Naive thymus-derived CD4-positive, alpha-beta T cell (primary cell): ENCODE measurements at regions of chr2 and their contacts with region 1.

Region 1: GRCh38 chr2:31831585-31831984 is 179.2 kb downstream of the MEMO1 start:
- DNase-seq: no peak
- ATAC-seq: no peak
- H3K4me3 ChIP-seq: no peak overlapping the region
- H3K4me3 Mint-ChIP-seq: no peak overlapping the region
- H3K27ac ChIP-seq: no peak overlapping the region
- H3K27ac Mint-ChIP-seq: no peak overlapping the region
- H3K4me1 ChIP-seq: no peaks in the 10 kb centered on the region
- H3K4me1 Mint-ChIP-seq: no peaks in the 10 kb centered on the region
- H3K27me3 ChIP-seq: no peaks in the 10 kb centered on the region
- H3K27me3 Mint-ChIP-seq: peaks cover 0 to 16% (median 10%) of the 10 kb centered on the region in 5 donors

Region 2: DNA sequence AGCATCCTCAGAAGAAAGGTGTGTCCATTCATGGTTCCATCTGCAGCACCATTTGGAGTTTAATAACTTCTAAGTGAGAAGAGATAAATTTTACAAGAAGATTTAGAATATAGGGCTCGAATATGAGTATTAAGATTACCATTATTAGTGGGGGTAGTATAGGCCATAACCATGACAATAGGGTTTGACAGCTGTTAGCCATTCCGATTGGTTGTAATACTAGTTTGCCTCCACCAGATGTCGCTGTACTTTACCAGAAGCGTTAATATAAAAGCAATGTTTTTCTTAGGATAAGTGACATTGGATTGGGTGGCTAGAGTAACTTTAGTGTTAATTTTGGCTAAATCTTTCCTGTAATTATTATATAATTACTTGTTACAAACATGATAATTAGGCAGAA is 143.3 kb before region 1 on chr2:
- CTCF ChIA-PET with region 1: interaction called, 3 read pairs
- POLR2A ChIA-PET with region 1: no interaction called
- intact Hi-C with region 1: loop called in 1 of 2 experiments (anchors 5 kb)
- DNase-seq: no peak
- ATAC-seq: no peak
- H3K4me3 ChIP-seq: no peak overlapping the region
- H3K4me3 Mint-ChIP-seq: no peak overlapping the region
- H3K27ac ChIP-seq: no peak overlapping the region
- H3K27ac Mint-ChIP-seq: no peak overlapping the region
- H3K4me1 ChIP-seq: no peaks in the 10 kb centered on the region
- H3K4me1 Mint-ChIP-seq: no peaks in the 10 kb centered on the region
- H3K27me3 ChIP-seq: no peaks in the 10 kb centered on the region
- H3K27me3 Mint-ChIP-seq: peaks cover 0 to 17% (median 11%) of the 10 kb centered on the region in 5 donors